ENCODE measurements at regions of chr4 and their contacts with region 1.

Region 1: DNA sequence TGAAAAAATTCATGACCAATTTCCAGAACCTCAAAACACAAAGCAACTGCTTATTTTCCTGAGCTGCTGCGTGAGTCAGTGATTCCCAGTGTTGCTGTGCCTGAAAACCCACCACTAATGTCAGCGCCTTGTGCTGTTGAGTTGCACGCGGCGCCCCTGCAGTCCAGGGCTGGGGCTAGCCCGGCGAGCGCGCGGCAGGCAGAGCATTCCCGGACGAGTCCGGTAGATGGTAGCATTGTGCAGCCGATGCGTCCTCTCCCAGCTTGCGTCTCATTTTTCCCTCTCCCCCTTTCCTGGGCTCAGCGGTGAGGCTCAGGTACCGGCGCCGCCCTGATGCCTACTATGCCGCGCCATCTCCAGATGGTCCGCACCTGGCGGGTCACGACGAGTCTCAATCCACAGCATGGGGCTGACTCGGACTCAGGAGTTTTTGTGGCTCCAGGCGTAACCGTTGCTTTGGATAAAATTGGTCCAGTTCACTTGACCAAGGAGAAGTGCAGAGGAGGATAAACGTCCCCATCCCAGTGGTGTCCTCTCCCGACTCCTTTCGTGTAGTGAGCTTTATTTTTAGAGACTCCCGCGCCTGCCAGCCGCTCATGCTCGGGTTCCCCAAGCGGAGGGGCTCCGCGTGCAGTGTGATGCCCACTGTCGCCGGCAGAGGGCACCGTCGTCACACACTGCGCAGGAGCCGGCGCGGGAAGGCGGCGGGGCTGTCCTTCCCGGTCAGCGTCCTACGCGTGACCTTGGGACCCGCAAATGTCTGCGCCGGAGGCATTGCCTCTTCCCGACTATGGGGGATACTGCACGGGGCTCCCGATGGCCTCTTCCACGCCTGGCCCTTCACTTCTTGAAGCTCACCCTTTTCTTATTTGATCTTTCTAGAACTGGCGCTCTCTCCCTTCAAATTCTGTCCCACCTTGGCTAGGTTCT is 53.6 kb upstream of the IGFBP7 start:
- DNase-seq: peak; percentile 78 to 87
- H3K4me3 ChIP-seq: peak overlapping the region; percentile 58 to 72
- H3K27ac ChIP-seq: peak overlapping the region; percentile 70 to 71
- H3K4me1 ChIP-seq: peaks cover 0 to 6% (median 5%) of the 10 kb centered on the region in 4 donors
- H3K27me3 ChIP-seq: no peaks in the 10 kb centered on the region
- CTCF ChIP-seq: peak; percentile 86 to 90

Region 2: GRCh38 chr4:57037982-57038604 is 125.7 kb before region 1 on chr4:
- intact Hi-C with region 1: loop called (anchors 5 kb)
- DNase-seq: peak; percentile 65 to 84
- H3K4me3 ChIP-seq: no peak overlapping the region
- H3K27ac ChIP-seq: peak overlapping the region; percentile 79 to 82
- H3K4me1 ChIP-seq: peaks cover 0 to 87% (median 37%) of the 10 kb centered on the region in 4 donors
- H3K27me3 ChIP-seq: no peaks in the 10 kb centered on the region
- CTCF ChIP-seq: peak; percentile 77 to 85

Region 3: DNA sequence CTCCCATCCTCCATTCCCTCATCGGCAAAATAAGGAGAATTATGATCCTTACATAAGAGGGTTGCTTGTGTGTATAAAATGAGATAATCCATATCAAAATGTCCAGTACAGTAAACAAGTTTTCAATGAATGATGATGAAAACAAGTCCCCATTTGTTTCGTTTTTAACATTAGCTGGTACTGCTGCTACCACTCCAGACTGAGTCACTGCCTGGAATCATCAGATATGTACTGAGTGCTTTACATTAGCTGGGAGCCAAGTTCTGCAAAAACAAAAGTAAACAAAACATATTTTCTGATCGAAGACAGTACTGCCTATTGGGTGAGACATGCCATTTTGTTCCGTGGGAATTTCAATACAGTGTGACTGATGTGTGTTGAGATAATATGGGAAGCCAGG is 69.6 kb after region 1 on chr4:
- intact Hi-C with region 1: no loop called
- DNase-seq: no peak
- H3K4me3 ChIP-seq: no peak overlapping the region
- H3K27ac ChIP-seq: no peak overlapping the region
- H3K4me1 ChIP-seq: peaks cover 0 to 11% (median 2%) of the 10 kb centered on the region in 4 donors
- H3K27me3 ChIP-seq: no peaks in the 10 kb centered on the region
- CTCF ChIP-seq: no peak

Region 4: DNA sequence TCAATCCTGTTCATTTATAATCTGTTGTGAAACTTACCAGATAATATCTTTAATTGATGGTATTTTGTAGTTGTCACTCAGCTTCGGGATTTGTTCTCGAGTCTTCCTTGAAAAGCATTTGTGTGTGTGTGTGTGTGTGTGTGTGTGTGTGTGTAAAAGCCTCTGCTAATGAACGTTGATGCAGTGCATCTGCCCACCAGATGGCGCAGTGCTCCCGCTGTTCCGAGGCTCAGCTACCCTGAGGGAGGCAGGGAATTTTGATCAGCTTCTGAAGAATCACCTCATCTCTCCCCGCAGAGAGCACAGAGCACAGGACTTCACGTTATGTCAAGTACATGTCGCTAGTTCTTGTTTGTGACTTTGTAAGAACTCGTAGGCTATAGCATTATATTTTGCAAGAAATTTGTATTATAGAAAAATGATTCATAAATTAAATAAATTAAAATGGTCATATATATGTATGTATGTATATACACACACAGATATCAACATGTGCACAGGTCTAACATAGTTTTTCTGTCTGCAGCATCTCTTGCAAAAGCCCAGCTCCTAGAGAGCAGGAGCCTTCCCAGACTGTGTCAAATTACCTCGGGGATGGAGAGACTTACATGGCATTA is 263.1 kb after region 1 on chr4:
- intact Hi-C with region 1: loop called (anchors 10 kb)
- DNase-seq: peak; percentile 48 to 76
- H3K4me3 ChIP-seq: no peak overlapping the region
- H3K27ac ChIP-seq: no peak overlapping the region
- H3K4me1 ChIP-seq: peaks cover 0 to 22% (median 11%) of the 10 kb centered on the region in 4 donors
- H3K27me3 ChIP-seq: no peaks in the 10 kb centered on the region
- CTCF ChIP-seq: peak; percentile 62 to 65

Measured in tibial artery (tissue), 4 donors.